A549 (cell line): ENCODE measurements at regions of chr12 and their contacts with region 1.

Region 1: DNA sequence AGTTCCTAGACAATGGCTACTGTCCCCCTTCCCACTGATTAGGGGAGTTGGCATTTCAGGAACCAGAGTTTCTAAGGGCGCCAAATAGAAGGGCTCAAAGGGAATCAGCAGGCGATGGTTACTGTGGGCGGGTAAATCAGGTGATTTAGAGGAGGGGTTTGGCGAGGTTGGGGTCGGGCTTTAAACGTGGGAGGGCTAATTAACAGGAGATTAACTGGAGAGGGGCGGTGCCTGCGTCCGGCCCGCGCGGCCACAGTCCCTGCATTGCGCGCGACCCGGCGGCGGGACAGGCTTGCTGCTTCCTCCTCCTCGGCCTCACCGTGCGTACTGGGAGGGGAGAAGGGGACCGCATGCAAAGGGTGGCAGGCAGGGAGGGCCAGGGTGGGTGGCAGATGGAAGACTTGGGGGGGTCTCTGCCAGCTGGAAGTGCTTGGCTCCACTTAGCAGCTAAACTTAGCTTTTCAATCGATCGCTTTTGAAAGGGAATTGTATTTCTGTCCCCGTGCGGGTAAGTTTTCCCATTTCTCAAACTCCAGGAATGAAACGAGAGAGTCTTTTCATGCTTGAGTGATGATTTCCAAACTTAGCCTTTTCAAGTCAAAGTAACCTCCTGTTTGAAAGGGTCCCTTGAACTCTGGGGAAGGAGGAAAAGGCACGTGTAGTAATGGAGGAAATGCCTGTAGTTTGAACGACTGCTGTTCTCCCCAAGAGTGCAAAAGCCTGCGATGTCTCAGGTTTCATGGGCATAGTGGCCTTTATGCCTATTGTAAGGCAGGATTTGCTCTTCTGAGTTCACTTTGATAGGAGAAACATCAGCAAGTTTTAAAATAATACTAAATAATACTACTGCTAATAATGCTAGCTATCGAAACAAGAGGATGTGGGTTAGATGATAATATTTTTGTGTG is at the start of gene MGST1:
- DNase-seq: peak; percentile 38 to 88
- ATAC-seq: peak; percentile 80 to 87
- H3K4me3 ChIP-seq: peak within 1 kb of the TSS; percentile 76
- H3K27ac ChIP-seq: peak within 1 kb of the TSS; percentile 97 to 99
- H3K4me1 ChIP-seq: peaks cover 46% of the 10 kb centered on the region
- CTCF ChIP-seq: no peak
- EP300 ChIP-seq: no peak
- POLR2A ChIP-seq: peak; percentile 97
- RAD21 ChIP-seq: no peak
- polyA plus RNA-seq, gene MGST1: 1,309 and 1,782 TPM in 2 replicates

Region 2: GRCh38 chr12:16218934-16219751 is 128.5 kb before region 1 on chr12:
- CTCF ChIA-PET with region 1: no interaction called
- POLR2A ChIA-PET with region 1: no interaction called
- DNase-seq: no peak
- ATAC-seq: no peak
- H3K4me3 ChIP-seq: no peak overlapping the region
- H3K27ac ChIP-seq: no peak overlapping the region
- H3K4me1 ChIP-seq: no peaks in the 10 kb centered on the region
- CTCF ChIP-seq: no peak
- EP300 ChIP-seq: no peak
- POLR2A ChIP-seq: no peak
- RAD21 ChIP-seq: no peak

Region 3: GRCh38 chr12:16238661-16239060 is 109.0 kb before region 1 on chr12:
- CTCF ChIA-PET with region 1: no interaction called
- POLR2A ChIA-PET with region 1: interaction called, 11 read pairs
- DNase-seq: no peak
- ATAC-seq: no peak
- H3K4me3 ChIP-seq: no peak overlapping the region
- H3K27ac ChIP-seq: peak overlapping the region in 1 of 2 experiments; percentile 46; a peak in 1 of 6 replicates
- H3K4me1 ChIP-seq: no peaks in the 10 kb centered on the region
- CTCF ChIP-seq: no peak
- EP300 ChIP-seq: no peak
- POLR2A ChIP-seq: no peak
- RAD21 ChIP-seq: no peak

Region 4: GRCh38 chr12:16335838-16336237 is 11.8 kb before region 1 on chr12:
- CTCF ChIA-PET with region 1: no interaction called
- POLR2A ChIA-PET with region 1: no interaction called
- DNase-seq: no peak
- ATAC-seq: no peak
- H3K4me3 ChIP-seq: no peak overlapping the region
- H3K27ac ChIP-seq: no peak overlapping the region
- H3K4me1 ChIP-seq: no peaks in the 10 kb centered on the region
- CTCF ChIP-seq: no peak
- EP300 ChIP-seq: no peak
- POLR2A ChIP-seq: no peak
- RAD21 ChIP-seq: no peak

Region 5: DNA sequence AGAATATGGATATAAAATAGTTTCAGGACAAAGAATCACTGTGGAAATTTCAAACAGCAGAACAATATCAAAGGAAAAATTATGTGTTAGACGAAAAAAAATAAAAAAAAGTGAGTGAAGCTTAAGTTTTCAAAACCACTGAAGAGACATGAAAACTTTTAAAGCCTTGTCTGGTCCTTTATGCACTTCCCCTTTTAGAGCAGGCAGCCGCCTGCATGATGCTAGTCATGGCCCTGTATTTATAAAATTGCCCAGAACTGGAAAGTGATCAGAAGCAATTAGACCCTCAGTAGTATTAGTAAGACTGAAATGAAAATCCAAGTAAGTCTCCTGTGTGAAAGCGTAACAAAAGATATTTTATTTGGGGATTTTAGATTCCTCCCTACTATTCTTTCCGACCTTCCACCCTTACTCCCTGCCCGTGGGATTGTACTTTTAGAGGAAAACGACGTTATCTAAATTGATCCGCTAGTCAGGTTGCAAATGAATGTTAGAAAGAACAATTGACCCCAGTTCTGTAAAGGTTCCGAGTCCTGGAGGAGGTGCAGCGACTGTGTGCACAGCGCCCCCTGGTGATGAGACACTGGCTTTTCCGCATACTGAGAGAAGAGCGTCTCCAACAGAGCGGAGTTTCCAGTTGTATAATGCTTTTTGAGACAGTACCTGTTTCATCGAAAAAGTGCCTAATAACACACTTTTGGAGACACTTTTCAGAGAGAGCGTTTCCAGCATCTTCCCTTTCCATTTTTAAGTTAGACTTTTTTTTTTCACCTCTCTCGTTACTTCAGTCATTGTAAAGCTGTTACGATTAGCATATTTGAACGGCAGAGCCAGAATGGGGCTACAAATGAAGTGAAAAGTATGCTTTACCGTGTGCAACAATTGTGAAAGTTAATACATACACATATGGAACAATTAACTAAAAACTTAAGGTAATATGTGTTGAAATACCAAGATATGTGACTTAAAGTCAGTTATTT is 12.2 kb after region 1 on chr12:
- CTCF ChIA-PET with region 1: interaction called, 15 read pairs
- POLR2A ChIA-PET with region 1: interaction called, 3 read pairs
- DNase-seq: peak; percentile 41 to 72
- ATAC-seq: peak; percentile 86 to 91
- H3K4me3 ChIP-seq: no peak overlapping the region
- H3K27ac ChIP-seq: peak overlapping the region in 1 of 2 experiments; percentile 22; a peak in 1 of 6 replicates
- H3K4me1 ChIP-seq: peaks cover 35% of the 10 kb centered on the region
- CTCF ChIP-seq: peak; percentile 85
- EP300 ChIP-seq: no peak
- POLR2A ChIP-seq: no peak
- RAD21 ChIP-seq: peak; percentile 74 to 79